Activated T-helper 2 cell treated with anti-CD3 and anti-CD28 coated beads, Interferon-gamma antibody, Interleukin-2, Interleukin-4, amounts not matched to agents 10 μg/mL and 5 μg/mL and 100 μg/mL, durations not matched to agents 14 hours and 24 hours and 36 hours (primary cell): ENCODE measurements at regions of chr1 and their contacts with region 1.

Region 1: DNA sequence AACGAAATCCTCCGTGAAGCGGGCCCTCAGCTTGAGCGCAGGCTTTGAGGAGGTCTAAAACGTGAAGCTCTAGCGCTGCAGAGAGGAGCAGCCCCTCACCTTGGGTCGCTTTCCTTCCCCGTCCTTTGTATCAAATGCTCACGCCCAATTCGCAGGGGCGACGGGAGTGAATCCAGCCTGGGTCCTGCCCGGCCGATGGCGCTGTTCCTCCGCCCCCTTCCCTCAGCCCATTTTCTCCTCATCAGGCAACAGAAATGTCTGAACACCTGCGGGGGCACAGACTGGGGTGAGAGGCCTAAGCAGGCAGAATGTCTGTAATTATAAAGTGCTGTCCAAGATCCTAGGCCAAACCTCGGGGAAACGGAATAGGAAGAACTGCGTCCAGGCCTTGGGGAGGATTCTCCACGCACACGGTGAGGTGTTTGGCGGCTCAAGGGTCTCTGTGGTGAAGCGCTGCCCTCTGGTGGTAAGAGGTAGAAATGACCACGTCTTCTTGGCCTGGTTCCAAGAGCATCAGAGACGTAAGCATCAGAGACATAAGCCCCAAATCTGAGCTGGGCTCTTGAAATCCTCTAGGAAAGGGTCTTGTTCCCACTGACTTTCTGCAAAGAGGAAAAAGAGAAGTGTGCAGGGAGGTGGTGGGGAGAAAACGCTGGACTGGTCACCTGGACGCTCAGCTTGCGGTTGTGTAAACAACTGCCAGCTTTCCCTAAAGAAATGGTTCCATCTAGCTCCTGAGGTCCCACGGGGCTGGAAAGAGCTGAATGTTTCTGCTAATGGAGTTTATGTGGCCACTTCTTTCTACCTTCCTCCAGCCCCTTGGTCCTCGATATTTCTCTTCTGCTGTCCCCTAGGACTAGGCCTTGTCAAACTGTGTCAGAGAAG is 92.1 kb upstream of the CD53 start:
- DNase-seq: peak; percentile 67
- H3K4me3 Mint-ChIP-seq: no peak overlapping the region
- H3K27ac Mint-ChIP-seq: no peak overlapping the region
- H3K4me1 Mint-ChIP-seq: peaks cover 24% of the 10 kb centered on the region
- H3K27me3 Mint-ChIP-seq: peaks cover 15% of the 10 kb centered on the region

Region 2: GRCh38 chr1:110524311-110525251 is 256.3 kb before region 1 on chr1:
- intact Hi-C with region 1: loop called (anchors 1 kb)
- DNase-seq: peak; percentile 31
- H3K4me3 Mint-ChIP-seq: no peak overlapping the region
- H3K27ac Mint-ChIP-seq: no peak overlapping the region
- H3K4me1 Mint-ChIP-seq: no peaks in the 10 kb centered on the region
- H3K27me3 Mint-ChIP-seq: peaks cover 26% of the 10 kb centered on the region

Region 3: DNA sequence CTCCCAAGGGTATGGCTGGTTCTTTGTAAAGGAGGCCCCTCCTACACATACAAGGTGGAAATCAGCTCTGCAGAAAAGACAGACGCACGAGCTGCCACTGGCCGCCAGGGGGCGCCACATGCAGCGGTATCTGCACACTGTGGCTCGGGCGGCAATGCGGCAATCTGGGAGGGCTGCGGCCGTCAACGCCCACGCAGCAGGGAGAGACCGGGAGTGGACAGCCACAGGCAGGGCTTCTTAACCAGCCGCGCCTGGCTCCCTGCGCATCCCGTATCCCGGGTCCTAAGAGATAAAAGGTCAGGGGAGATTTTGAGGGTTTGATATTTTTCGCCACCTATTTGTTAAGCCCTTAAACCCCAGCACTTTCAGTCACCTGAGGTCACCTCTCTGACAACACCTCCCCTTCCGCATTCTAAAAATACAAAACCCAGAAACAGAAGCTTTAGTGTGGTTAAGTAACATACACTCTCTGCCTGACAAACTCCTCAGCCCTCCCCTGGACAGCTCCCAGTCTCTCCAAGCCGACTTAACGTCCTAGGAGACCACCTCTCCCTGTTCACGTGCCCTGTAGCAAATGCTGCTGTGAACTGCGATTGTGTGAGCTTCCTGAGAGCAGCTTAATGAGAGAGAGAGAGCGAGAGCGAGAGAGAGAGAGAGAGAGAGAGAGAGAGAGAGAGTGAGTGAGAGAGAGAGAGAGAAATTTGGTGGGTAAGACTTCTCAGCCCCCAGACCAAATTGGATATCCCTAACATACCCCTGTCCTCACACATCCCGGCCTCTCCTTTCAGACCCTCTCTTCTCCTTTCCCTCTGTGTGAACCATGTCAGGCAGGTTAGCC is 161.2 kb before region 1 on chr1:
- intact Hi-C with region 1: loop called (anchors 1 kb)
- DNase-seq: peak; percentile 83
- H3K4me3 Mint-ChIP-seq: peak overlapping the region; percentile 78
- H3K27ac Mint-ChIP-seq: peak overlapping the region; percentile 53
- H3K4me1 Mint-ChIP-seq: peaks cover 32% of the 10 kb centered on the region
- H3K27me3 Mint-ChIP-seq: peaks cover 18% of the 10 kb centered on the region

Region 4: GRCh38 chr1:110766025-110766647 is 14.7 kb before region 1 on chr1:
- intact Hi-C with region 1: loop called (anchors 2 kb)
- DNase-seq: peak; percentile 31
- H3K4me3 Mint-ChIP-seq: no peak overlapping the region
- H3K27ac Mint-ChIP-seq: no peak overlapping the region
- H3K4me1 Mint-ChIP-seq: peaks cover 6% of the 10 kb centered on the region
- H3K27me3 Mint-ChIP-seq: peaks cover 57% of the 10 kb centered on the region

Region 5: DNA sequence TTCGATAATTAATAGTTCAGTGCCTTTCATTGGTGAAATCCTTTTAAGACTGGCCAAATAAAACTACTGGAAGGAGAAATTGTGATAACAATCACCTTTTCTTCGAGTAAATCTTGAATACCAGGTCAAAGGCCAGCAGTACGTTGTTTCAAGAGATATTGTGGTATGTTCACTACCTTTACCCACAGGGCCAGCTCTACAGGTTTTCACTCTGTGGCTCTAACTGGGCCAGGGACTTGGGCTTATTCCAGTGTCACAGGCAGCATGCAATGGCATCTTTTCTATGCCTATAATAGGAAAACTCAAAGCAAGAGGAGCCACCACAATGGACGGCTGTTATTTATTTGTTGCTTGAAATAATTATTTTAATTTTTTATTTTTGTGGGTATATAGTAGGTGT is 209.7 kb after region 1 on chr1:
- intact Hi-C with region 1: loop called (anchors 1 kb)
- DNase-seq: no peak
- H3K4me3 Mint-ChIP-seq: no peak overlapping the region
- H3K27ac Mint-ChIP-seq: no peak overlapping the region
- H3K4me1 Mint-ChIP-seq: peaks cover 2% of the 10 kb centered on the region
- H3K27me3 Mint-ChIP-seq: peaks cover 38% of the 10 kb centered on the region